ENCODE measurements at regions of chr16 and their contacts with region 1.

Region 1: GRCh38 chr16:84754353-84754856 is 54.6 kb downstream of the USP10 start:
- DNase-seq: peak in 31 of 42 donors; percentile 25 to 87 (median 69)

Region 2: DNA sequence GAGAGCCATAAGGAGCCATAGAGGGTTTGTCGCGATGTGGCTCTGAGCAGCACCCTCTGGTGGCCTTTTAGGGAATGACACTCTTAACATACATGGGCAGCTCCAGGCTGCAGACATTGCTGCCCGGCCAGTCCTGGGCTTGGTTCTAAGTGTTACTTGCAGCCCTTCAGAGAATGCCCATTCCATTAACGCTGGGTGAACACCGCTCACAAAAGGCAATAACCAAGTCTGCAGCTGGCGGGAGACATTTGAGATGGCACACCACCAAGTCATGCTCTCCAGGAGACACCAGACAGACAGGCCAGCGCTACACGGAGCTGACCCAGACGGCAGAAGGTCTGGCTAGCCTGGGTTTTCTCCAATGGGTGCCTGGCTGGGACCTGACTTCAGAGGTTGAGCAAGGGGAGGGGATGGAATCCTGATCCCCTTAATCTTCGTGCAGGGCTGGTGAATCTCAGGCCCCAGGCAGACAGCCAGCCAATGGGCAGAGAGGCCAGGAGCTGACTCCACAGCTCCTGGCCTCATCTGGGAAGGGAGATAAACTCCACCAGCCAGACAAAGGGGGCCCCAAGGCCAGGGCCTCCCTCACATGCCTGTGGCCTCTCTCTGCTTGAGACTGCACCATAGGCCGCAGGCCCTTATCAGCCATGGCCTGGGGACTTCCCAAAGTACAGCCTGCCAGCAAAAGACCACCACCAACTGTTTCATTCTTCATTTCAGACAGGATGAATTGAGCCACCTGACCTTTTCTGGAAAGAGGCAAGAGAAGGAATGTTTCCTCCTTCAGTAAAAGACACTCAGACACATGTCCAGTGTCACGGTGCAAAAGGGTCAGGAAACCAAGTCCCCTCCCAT is 198.2 kb after region 1 on chr16:
- intact Hi-C with region 1: loop called (anchors 5 kb)
- DNase-seq: peak in 41 of 42 donors; percentile 47 to 93 (median 79)

Region 3: GRCh38 chr16:84970447-84971127 is 216.2 kb after region 1 on chr16:
- intact Hi-C with region 1: loop called (anchors 2 kb)
- DNase-seq: peak; percentile 58 to 93 (median 84)